ENCODE measurements at regions of chr13 and their contacts with region 1.

Region 1: GRCh38 chr13:20828539-20829364 is 55.0 kb upstream of the EEF1AKMT1 start:
- DNase-seq: peak; percentile 45
- H3K4me3 ChIP-seq: peak overlapping the region; percentile 26 to 42 (median 33)
- H3K27ac ChIP-seq: peak overlapping the region; percentile 4
- H3K4me1 ChIP-seq: no peaks in the 10 kb centered on the region
- H3K27me3 ChIP-seq: no peaks in the 10 kb centered on the region
- CTCF ChIP-seq: peak; percentile 67 to 83

Region 2: DNA sequence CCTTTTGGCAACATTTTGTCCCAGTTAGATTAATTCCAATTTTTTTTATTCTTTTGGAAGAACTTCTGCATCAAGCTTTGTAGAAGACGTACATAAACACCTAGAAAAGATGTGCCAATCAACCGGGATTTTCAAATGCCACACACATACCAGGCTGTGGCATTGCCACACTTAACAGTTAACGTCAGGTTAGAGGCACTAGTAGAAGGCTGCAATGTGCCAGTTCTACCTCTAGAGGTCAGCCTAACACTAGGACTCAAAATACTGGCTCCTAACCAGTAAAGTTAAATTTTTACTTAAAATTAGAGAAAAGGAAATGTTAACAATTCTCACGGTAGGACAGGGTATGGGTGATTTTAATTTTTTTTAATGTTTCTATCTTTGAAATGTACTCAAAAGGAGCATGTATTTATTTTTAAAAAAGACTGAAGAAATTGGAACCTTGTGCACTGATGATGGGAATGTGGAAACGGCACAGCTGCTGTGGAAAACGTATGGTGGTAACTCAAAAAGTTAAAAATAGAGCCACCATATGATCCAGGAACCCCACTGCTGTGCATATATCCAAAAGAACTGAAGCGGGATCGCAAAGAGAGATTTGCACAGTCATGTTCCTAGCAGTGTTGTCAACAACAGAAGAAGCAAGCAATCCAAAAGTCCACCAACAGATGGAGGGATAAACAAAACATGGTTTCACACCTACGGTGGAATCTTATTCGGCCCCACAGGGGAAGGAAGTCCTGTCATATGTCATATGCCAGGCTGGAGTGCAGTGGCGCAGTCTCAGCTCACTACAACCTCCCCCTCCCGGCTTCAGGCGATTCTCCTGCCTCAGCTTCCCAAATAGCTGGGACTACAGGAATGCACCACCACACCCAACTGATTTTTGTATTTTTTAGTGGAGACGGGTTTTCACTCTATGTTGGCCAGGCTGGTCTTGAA is 333.4 kb before region 1 on chr13:
- CTCF ChIA-PET with region 1: no interaction called
- dilution Hi-C with region 1: no loop called
- in situ Hi-C with region 1: loop called in 1 of 2 experiments (anchors 10 kb)
- intact Hi-C with region 1: loop called (anchors 1 kb)
- DNase-seq: peak; percentile 56
- H3K4me3 ChIP-seq: no peak overlapping the region
- H3K27ac ChIP-seq: no peak overlapping the region
- H3K4me1 ChIP-seq: peaks cover 10% of the 10 kb centered on the region
- H3K27me3 ChIP-seq: no peaks in the 10 kb centered on the region
- CTCF ChIP-seq: peak; percentile 91 to 98

Region 3: DNA sequence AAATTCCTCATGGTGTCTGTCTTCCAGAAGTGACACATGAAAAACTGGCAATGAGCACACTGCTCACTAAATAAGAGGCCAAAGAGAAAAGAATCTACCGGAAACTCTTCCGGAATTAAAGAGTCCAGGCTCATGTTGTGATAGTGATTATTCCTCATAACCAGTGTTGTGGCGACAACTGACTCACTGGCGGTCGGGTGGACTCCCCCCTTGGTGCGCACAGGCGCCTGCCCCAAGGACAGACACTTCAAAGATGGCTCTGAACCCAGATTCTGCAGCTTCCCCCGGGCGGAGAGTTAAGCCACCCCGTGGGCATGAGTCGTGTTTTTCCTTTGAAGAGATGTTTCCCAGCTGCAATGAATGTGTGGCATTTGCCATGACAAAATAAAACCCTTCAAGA is 115.0 kb before region 1 on chr13:
- CTCF ChIA-PET with region 1: no interaction called
- dilution Hi-C with region 1: no loop called
- in situ Hi-C with region 1: no loop called
- intact Hi-C with region 1: loop called (anchors 1 kb)
- DNase-seq: no peak
- H3K4me3 ChIP-seq: no peak overlapping the region
- H3K27ac ChIP-seq: no peak overlapping the region
- H3K4me1 ChIP-seq: no peaks in the 10 kb centered on the region
- H3K27me3 ChIP-seq: no peaks in the 10 kb centered on the region
- CTCF ChIP-seq: no peak